Heart left ventricle (tissue), 16 donors: ENCODE measurements at regions of chr1 and their contacts with region 1.

Region 1: DNA sequence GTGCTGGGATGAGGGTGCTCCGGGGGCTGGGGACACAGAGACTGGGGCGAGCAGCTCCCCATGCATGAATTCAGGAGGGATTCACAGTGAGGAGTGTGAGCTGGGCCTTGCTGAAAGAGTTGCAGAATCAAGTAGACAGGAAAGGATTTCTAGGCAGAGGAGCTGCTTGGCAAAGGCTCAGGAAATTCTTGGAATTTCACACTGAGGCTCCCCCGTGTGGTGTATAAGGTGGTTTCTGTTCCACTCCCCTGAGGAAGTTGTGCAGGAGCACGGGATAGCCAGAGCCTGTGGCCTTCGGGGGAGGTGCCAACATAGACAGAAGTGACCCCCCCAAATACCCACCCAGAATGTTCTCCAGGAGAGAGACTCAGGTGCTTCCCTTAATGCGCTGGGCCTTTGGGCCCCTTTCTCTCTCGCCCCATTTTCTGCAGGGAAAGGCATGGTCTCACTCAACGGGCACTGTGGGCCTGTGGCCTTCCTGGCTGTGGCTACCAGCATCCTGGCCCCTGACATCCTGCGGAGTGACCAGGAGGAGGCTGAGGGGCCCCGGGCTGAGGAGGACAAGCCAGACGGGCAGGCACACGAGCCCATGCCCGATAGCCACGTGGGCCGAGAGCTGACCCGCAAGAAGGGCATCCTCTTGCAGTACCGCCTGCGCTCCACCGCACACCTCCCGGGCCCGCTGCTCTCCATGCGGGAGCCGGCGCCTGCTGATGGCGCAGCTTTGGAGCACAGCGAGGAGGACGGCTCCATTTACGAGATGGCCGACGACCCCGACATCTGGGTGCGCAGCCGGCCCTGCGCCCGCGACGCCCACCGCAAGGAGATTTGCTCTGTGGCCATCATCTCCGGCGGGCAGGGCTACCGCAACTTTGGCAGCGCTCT is 58.5 kb upstream of the ACTL8 start:
- DNase-seq: peak in 1 of 5 donors; percentile 28
- ATAC-seq: peak in 3 of 4 donors; percentile 11 to 47 (median 24)
- H3K4me3 ChIP-seq: no peak overlapping the region
- H3K27ac ChIP-seq: no peak overlapping the region
- H3K4me1 ChIP-seq: peaks cover 0 to 11% (median 4%) of the 10 kb centered on the region in 12 donors
- H3K27me3 ChIP-seq: no peaks in the 10 kb centered on the region
- CTCF ChIP-seq: peak in 9 of 12 donors; percentile 12 to 52 (median 27)
- POLR2A ChIP-seq: no peak

Region 2: DNA sequence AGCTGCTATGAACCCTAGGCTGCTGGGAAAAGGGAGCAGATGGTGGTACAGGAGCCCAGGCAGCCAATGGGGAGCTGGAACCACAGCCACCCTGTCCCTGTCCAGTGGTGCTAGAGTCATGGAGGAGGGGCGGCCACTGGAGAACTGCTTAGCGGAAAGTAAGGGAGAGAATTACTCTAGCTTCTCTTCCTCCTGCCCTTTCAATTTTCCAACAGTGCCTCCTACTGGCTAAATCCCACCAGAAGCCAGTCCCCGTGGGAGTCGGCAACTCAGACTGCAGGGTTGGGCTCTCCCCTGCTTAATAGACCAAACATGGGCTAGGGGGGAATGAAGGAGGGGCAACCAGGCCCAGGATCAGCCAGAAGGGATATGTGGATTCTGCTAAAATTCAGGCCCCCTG is 213.0 kb after region 1 on chr1:
- intact Hi-C with region 1: loop called in 1 of 10 experiments (anchors 10 kb)
- DNase-seq: no peak
- ATAC-seq: peak; percentile 48 to 77 (median 64)
- H3K4me3 ChIP-seq: no peak overlapping the region
- H3K27ac ChIP-seq: no peak overlapping the region
- H3K4me1 ChIP-seq: no peaks in the 10 kb centered on the region
- H3K27me3 ChIP-seq: peaks cover 0 to 18% (median 7%) of the 10 kb centered on the region in 9 donors
- CTCF ChIP-seq: peak in 9 of 12 donors; percentile 14 to 49 (median 37)
- POLR2A ChIP-seq: no peak